Activated B cell treated with CpG ODN at 0.5 μM for 24 hours (primary cell): ENCODE measurements at regions of chr19 and their contacts with region 1.

Region 1: GRCh38 chr19:16584248-16585141 is 12.3 kb upstream of the SLC35E1 start:
- DNase-seq: peak; percentile 78
- ATAC-seq: peak; percentile 46
- H3K4me3 Mint-ChIP-seq: peak overlapping the region; percentile 94
- H3K27ac Mint-ChIP-seq: peak overlapping the region; percentile 99
- H3K4me1 Mint-ChIP-seq: peaks cover 92% of the 10 kb centered on the region
- H3K27me3 Mint-ChIP-seq: no peaks in the 10 kb centered on the region
- CTCF ChIP-seq: no peak

Region 2: DNA sequence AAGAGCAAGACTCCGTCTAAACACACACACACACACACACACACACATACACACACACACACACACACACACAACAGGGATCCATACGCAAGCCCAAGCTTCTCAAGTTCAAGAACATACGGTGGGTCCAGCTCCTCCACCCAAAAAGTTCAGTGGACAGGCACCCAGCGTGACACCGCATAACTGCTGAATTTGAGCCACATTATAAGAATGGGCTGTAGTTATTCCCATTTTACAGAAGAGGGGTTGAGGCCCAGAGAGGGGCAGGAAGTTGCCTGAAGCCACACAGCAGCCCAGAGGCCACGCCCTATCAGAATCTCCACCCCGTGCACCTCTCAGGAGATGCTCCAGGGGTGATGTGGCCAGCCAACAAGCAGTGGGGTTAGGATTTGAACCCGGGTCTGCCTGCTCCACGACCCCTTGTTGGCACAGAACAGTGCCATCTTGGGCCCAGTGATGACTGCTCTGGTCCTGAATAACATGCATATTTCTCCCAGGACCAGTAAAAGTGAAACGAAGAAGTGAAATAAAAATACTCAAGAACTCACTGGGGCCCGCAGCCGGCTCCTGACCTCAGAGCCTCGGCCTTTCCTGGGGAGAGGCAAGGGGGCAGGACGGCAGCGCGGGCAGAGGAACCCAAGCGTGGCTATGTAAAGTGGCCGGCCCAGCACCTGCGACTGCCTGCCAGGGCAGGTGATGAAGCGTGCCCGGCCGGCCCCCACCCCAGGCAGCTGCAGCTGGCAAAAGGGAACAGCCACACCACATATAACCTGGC is 324.9 kb before region 1 on chr19:
- CTCF ChIA-PET with region 1: no interaction called
- POLR2A ChIA-PET with region 1: interaction called, 14 read pairs
- intact Hi-C with region 1: loop called (anchors 5 kb)
- DNase-seq: peak; percentile 78
- ATAC-seq: peak; percentile 75
- H3K4me3 Mint-ChIP-seq: peak overlapping the region; percentile 65
- H3K27ac Mint-ChIP-seq: peak overlapping the region; percentile 93
- H3K4me1 Mint-ChIP-seq: peaks cover 90% of the 10 kb centered on the region
- H3K27me3 Mint-ChIP-seq: no peaks in the 10 kb centered on the region
- CTCF ChIP-seq: no peak

Region 3: DNA sequence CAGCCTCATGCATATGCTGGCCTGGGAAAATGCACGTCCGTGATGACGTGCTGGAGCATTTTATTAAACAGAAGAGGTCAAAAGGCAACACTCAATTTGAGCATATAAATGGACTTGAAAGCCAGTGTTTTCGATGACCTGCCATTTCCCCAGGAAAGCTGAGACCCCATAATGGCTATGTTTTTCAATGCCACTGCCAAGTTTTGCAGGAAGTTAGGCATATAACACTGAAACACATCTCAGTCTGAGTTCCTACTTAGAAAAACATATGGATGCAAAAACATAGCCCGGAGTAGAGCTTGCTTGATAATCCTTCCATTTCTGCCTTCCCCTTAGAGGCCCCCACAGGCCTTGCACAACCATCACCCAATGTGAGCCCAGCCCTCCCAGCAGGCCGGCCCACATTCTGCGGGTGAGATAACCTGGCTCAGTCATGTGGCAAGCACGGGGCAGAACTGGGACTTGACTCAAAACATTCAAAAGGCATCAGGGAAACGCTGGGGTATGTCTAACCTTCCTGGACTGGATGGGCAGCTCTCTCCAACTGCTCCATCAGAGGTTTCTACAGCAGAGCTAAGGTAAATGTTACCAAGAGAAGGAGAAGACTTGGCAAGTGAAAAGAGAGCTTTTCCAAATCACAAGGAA is 137.6 kb before region 1 on chr19:
- CTCF ChIA-PET with region 1: interaction called, 3 read pairs
- POLR2A ChIA-PET with region 1: interaction called, 126 read pairs
- intact Hi-C with region 1: loop called (anchors 1 kb)
- DNase-seq: peak; percentile 52
- ATAC-seq: peak; percentile 43
- H3K4me3 Mint-ChIP-seq: peak overlapping the region; percentile 64
- H3K27ac Mint-ChIP-seq: peak overlapping the region; percentile 95
- H3K4me1 Mint-ChIP-seq: peaks cover 94% of the 10 kb centered on the region
- H3K27me3 Mint-ChIP-seq: no peaks in the 10 kb centered on the region
- CTCF ChIP-seq: no peak

Region 4: DNA sequence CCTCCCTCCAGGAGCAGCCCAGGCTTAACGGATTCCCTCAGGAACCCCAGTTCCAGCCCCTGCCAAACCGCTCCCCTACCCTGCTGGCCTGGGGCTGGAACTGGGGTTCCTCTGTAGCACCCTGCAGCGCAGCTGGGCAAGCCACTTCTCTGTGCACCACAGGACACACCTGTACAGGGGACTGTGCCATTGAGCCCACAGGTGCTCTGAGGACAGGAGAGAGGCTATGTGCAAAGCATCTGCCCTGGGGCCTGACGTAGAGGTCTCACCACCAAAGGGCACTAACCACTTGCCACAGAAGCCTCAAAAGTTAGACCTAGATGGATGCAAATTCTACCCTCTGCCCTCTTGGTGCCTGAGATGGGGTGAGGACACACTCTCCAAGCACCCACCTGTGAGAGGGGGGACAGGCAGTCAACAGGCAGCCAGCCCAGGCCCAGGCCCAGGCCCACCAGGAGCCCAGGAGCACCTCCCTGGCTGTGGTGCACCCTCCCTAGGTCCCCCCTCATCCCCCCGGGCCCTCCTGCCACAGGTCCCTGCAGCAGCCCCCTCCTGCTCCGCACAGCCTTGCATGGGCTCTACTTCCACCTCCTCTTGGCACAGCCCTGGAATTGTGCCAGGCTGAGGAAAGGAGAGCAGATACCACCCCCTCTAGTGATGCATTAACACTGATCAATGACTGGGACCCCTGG is 15.3 kb after region 1 on chr19:
- CTCF ChIA-PET with region 1: interaction called, 4 read pairs
- POLR2A ChIA-PET with region 1: interaction called, 59 read pairs
- intact Hi-C with region 1: loop called (anchors 2 kb)
- DNase-seq: no peak
- ATAC-seq: peak; percentile 37
- H3K4me3 Mint-ChIP-seq: no peak overlapping the region
- H3K27ac Mint-ChIP-seq: peak overlapping the region; percentile 41
- H3K4me1 Mint-ChIP-seq: peaks cover 59% of the 10 kb centered on the region
- H3K27me3 Mint-ChIP-seq: no peaks in the 10 kb centered on the region
- CTCF ChIP-seq: no peak

Region 5: DNA sequence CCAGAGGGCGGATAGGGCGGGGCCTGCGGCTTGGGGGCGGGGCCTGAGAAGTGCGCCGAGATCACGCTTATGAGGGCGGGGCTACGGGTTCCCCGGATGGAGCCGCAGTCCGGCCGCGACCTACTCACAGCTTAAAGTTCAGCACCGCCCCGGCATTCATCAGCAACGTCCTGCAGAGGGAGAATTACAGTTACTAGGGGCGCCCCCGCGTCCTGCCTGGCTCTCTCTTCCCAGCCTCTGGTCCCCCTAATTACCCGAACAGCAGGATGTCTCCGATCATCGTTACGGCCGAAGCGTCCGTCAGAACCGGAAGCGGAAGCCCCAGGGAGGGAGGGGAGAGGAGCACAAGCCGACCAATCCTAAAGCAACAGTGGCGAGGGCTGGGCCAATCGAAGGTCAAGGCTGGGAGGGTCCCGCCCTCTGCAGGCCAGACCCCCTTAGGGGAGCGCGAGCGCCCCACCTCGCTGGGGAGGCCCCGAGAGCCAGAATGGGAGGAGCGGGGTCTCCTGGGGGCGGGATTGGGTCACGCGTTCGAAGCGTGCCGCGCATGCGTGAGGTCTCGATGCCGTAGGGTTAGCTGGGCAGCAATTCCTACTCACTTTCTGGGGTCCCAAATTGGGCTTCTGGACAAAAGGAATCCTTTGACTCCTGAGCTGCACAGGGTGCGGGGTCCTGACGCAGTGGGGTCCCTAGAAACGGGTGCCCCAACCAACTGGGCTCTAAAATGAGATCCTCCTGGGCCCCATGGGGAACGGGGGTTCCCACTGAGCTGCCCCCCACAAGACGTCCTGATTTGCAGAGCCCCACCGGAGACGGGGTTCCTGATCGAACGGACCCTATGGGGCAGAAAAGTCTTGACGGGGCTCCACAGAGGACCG is 75.6 kb after region 1 on chr19 and contains the start of gene SMIM7:
- CTCF ChIA-PET with region 1: interaction called, 3 read pairs
- POLR2A ChIA-PET with region 1: interaction called, 137 read pairs
- intact Hi-C with region 1: loop called (anchors 1 kb)
- DNase-seq: peak; percentile 96
- ATAC-seq: peak; percentile 96
- H3K4me3 Mint-ChIP-seq: peak within 1 kb of the TSS; percentile 97
- H3K27ac Mint-ChIP-seq: peak within 1 kb of the TSS; percentile 95
- H3K4me1 Mint-ChIP-seq: peaks cover 50% of the 10 kb centered on the region
- H3K27me3 Mint-ChIP-seq: no peaks in the 10 kb centered on the region
- CTCF ChIP-seq: no peak
- total RNA-seq, gene SMIM7: 90.2 and 110 TPM in 2 replicates

Region 6: GRCh38 chr19:16801596-16801995 is 217.1 kb after region 1 on chr19:
- CTCF ChIA-PET with region 1: no interaction called
- POLR2A ChIA-PET with region 1: no interaction called
- intact Hi-C with region 1: no loop called
- DNase-seq: no peak
- ATAC-seq: no peak
- H3K4me3 Mint-ChIP-seq: no peak overlapping the region
- H3K27ac Mint-ChIP-seq: no peak overlapping the region
- H3K4me1 Mint-ChIP-seq: peaks cover 17% of the 10 kb centered on the region
- H3K27me3 Mint-ChIP-seq: no peaks in the 10 kb centered on the region
- CTCF ChIP-seq: no peak

Region 7: GRCh38 chr19:17305517-17306284 is 721.2 kb after region 1 on chr19 and contains the start of gene MRPL34:
- CTCF ChIA-PET with region 1: no interaction called
- POLR2A ChIA-PET with region 1: interaction called, 3 read pairs
- intact Hi-C with region 1: loop called (anchors 5 kb)
- DNase-seq: peak; percentile 88
- ATAC-seq: peak; percentile 69
- H3K4me3 Mint-ChIP-seq: peak within 1 kb of the TSS; percentile 88
- H3K27ac Mint-ChIP-seq: peak within 1 kb of the TSS; percentile 91
- H3K4me1 Mint-ChIP-seq: peaks cover 51% of the 10 kb centered on the region
- H3K27me3 Mint-ChIP-seq: no peaks in the 10 kb centered on the region
- CTCF ChIP-seq: no peak
- total RNA-seq, gene MRPL34: 38.2 and 46.1 TPM in 2 replicates